H1 (cell line): ENCODE measurements at regions of chr11 and their contacts with region 1.

Region 1: DNA sequence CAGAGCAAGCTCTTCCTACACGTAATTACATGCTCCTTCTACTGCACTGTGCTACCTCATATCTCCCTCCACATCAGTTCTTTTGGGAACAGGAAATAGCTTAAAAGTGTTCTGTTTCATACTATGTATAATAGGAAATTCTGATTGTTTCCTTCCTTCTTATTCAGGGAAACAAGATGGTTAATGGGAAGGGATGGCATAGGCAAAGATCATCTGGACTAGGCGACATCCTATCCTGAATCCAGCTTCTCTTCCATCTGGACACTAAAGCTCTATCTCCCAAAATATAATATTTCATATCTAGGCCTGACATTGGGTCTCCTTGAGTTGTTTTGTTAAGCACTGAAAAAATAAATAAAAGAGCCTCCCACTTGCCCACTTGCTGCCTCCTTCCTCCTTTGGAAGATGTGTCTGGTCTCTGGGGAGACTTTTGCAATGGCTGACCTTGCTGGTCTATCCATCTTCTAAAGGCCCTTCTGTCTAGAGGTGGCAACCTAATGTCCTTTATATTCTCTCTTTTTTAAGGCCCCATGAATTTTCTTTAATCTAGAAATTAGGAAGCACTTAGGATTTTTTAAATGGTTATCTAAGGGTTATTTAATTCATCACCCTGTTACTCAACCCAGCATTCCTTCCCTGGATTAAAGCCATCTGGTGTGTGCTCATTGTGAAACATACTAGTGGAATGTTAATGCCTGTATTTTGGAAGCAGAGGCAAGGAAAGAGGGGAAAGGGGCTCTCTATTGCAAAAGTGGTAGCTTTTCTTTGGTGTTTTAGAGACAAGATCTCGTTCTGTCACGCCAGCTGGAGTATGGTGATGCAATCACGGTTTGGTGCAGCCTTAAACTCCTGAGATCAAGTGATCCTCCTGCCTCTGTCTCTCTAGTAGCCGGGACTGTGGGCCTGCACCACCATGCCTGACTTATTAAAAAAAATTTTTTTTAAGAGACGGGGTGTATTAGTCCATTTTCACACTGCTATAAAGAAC is 20.6 kb downstream of the CLMP start:
- DNase-seq: no peak
- H3K4me3 ChIP-seq: no peak overlapping the region
- H3K27ac ChIP-seq: no peak overlapping the region
- H3K4me1 ChIP-seq: peaks cover 0 to 10% (median 6%) of the 10 kb centered on the region in 4 experiments; a peak in 4 of 7 replicates
- H3K27me3 ChIP-seq: no peaks in the 10 kb centered on the region
- CTCF ChIP-seq: no peak
- EP300 ChIP-seq: no peak
- POLR2A ChIP-seq: no peak
- RAD21 ChIP-seq: no peak

Region 2: GRCh38 chr11:123188508-123189165 is 14.1 kb after region 1 on chr11:
- CTCF ChIA-PET with region 1: interaction called, 16 read pairs
- POLR2A ChIA-PET with region 1: interaction called, 67 read pairs
- DNase-seq: no peak
- H3K4me3 ChIP-seq: peak overlapping the region in 1 of 4 experiments; percentile 23; a peak in 1 of 8 replicates
- H3K27ac ChIP-seq: no peak overlapping the region; the same call in 1 of the 2 replicates
- H3K4me1 ChIP-seq: peaks cover 11 to 41% (median 17%) of the 10 kb centered on the region in 4 experiments
- H3K27me3 ChIP-seq: no peaks in the 10 kb centered on the region; a peak in 1 of 7 replicates
- CTCF ChIP-seq: peak in 1 of 3 experiments; percentile 23; a peak in 1 of 4 replicates
- EP300 ChIP-seq: no peak
- POLR2A ChIP-seq: no peak
- RAD21 ChIP-seq: no peak

Region 3: DNA sequence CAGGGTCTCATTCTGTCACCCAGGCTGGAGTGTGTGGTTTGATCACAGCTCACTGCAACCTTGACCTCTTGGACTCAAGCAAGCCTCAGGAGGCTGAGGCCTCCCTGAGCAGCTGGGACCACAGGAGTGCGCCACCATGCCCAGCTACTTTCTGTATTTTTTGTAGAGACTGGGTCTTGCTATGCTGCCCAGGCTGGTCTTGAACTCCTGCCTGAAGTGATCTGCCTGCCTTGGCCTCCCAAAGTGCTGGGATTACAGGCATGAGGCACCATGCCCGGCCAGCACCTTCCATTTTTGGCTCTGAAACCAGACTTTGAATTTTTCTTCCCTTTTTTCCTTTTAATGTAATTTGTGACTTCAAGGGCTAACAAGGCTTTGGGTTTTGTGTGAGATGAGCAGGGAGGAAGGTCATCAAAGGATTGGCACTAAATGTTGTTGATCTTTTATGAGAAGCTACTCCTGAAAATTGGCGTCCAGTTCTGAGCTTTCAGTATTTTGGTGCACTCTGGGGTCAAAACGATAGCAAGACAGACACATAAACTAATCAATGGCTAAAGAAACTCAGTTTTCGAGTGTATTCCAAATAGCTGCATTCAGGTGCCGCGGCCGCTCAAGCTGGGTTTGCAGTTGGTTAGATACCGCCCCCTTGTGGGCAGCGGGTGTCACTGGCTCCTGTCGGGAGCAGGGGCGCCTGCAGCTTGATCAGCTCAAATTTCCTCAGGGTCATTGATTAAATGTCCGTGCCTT is 72.4 kb after region 1 on chr11:
- CTCF ChIA-PET with region 1: interaction called, 170 read pairs
- POLR2A ChIA-PET with region 1: interaction called, 4 read pairs
- DNase-seq: peak; percentile 61 to 92
- H3K4me3 ChIP-seq: no peak overlapping the region
- H3K27ac ChIP-seq: no peak overlapping the region
- H3K4me1 ChIP-seq: peaks cover 0 to 5% (median under 1%) of the 10 kb centered on the region in 4 experiments; a peak in 2 of 7 replicates
- H3K27me3 ChIP-seq: no peaks in the 10 kb centered on the region
- CTCF ChIP-seq: peak; percentile 94 to 98 (median 95)
- EP300 ChIP-seq: no peak
- POLR2A ChIP-seq: no peak
- RAD21 ChIP-seq: peak; percentile 99

Region 4: GRCh38 chr11:123461164-123461563 is 286.7 kb after region 1 on chr11:
- CTCF ChIA-PET with region 1: no interaction called
- POLR2A ChIA-PET with region 1: no interaction called
- DNase-seq: no peak
- H3K4me3 ChIP-seq: no peak overlapping the region
- H3K27ac ChIP-seq: no peak overlapping the region
- H3K4me1 ChIP-seq: no peaks in the 10 kb centered on the region
- H3K27me3 ChIP-seq: no peaks in the 10 kb centered on the region
- CTCF ChIP-seq: no peak
- EP300 ChIP-seq: no peak
- POLR2A ChIP-seq: no peak
- RAD21 ChIP-seq: no peak